ENCODE measurements at regions of chr7 and their contacts with region 1.

Region 1: GRCh38 chr7:149090397-149091195 is at the start of gene ZNF786:
- DNase-seq: peak; percentile 89 to 91 (median 91)
- H3K4me3 ChIP-seq: peak within 1 kb of the TSS; percentile 76 to 99
- H3K4me3 Mint-ChIP-seq: peak within 1 kb of the TSS; percentile 95 to 100 (median 99)
- H3K27ac ChIP-seq: peak within 1 kb of the TSS; percentile 88
- H3K27ac Mint-ChIP-seq: peak within 1 kb of the TSS; percentile 88 to 100 (median 99)
- H3K4me1 ChIP-seq: peaks cover 14% of the 10 kb centered on the region
- H3K4me1 Mint-ChIP-seq: peaks cover 13 to 36% (median 18%) of the 10 kb centered on the region in 4 donors
- H3K27me3 ChIP-seq: no peaks in the 10 kb centered on the region
- H3K27me3 Mint-ChIP-seq: no peaks in the 10 kb centered on the region
- total RNA-seq, gene ZNF786: 18.6 to 18.8 TPM

Region 2: GRCh38 chr7:148940702-148941597 is 149.6 kb before region 1 on chr7:
- CTCF ChIA-PET with region 1: no interaction called
- POLR2A ChIA-PET with region 1: interaction called, 3 read pairs
- intact Hi-C with region 1: loop called (anchors 1 kb)
- DNase-seq: peak; percentile 75 to 84 (median 80)
- H3K4me3 ChIP-seq: peak overlapping the region; percentile 54 to 75
- H3K4me3 Mint-ChIP-seq: peak overlapping the region; percentile 93 to 97 (median 96)
- H3K27ac ChIP-seq: peak overlapping the region; percentile 90
- H3K27ac Mint-ChIP-seq: peak overlapping the region; percentile 91 to 99 (median 98)
- H3K4me1 ChIP-seq: peaks cover 21% of the 10 kb centered on the region
- H3K4me1 Mint-ChIP-seq: peaks cover 6 to 25% (median 13%) of the 10 kb centered on the region in 4 donors
- H3K27me3 ChIP-seq: no peaks in the 10 kb centered on the region
- H3K27me3 Mint-ChIP-seq: no peaks in the 10 kb centered on the region

Region 3: DNA sequence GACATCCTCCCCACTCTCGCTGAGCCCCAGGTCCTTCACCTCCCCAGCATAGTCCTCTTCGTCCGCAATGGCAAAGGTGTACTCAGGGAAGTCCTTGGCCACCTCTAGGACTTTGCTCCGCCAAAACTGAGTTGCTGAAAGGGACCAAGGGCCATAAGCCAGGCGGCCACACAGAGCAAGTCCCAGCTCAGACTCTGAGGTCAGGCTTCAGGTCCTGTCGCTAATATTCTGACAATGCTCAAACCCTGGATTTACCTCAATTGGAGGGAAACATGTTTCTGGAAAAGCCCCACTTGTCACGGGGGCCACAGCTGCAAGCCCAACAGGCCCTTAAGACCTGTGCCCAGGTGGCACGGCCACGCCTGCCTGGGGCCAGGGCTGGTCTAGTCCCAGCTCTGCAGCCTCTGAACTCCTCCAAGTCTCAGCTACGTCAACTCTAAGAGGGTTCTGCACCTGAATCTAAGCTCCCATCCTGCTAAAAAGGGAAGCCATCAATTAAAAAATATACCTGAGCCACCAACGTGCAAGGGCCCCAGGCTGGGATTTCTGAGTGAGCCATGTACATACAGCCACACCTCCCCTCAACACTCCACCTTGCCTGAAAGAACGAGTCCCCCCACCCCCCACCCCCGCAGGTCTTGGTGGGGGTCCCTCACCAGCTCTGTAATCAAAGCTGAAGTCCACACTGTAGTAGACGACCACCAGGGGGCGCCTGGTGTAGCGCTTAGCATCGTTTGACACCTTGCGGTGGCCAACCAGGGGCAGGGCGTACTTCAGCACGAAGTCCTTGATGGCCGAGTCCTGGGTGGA is 85.2 kb before region 1 on chr7:
- CTCF ChIA-PET with region 1: interaction called, 19 read pairs
- POLR2A ChIA-PET with region 1: interaction called, 8 read pairs
- intact Hi-C with region 1: loop called (anchors 1 kb)
- DNase-seq: peak; percentile 71 to 79 (median 73)
- H3K4me3 ChIP-seq: no peak overlapping the region
- H3K4me3 Mint-ChIP-seq: no peak overlapping the region
- H3K27ac ChIP-seq: no peak overlapping the region
- H3K27ac Mint-ChIP-seq: peak overlapping the region in 5 of 7 donors; percentile 46 to 87 (median 62)
- H3K4me1 ChIP-seq: peaks cover 4% of the 10 kb centered on the region
- H3K4me1 Mint-ChIP-seq: peaks cover 3 to 4% (median 4%) of the 10 kb centered on the region in 4 donors
- H3K27me3 ChIP-seq: no peaks in the 10 kb centered on the region
- H3K27me3 Mint-ChIP-seq: no peaks in the 10 kb centered on the region

Region 4: GRCh38 chr7:149071641-149072437 is 18.8 kb before region 1 on chr7:
- CTCF ChIA-PET with region 1: interaction called, 28 read pairs
- POLR2A ChIA-PET with region 1: interaction called, 11 read pairs
- intact Hi-C with region 1: no loop called
- DNase-seq: peak in 4 of 5 donors; percentile 46 to 60 (median 55)
- H3K4me3 ChIP-seq: no peak overlapping the region
- H3K4me3 Mint-ChIP-seq: peak overlapping the region in 4 of 8 donors; percentile 8 to 55 (median 46)
- H3K27ac ChIP-seq: peak overlapping the region; percentile 31
- H3K27ac Mint-ChIP-seq: peak overlapping the region; percentile 36 to 83 (median 72)
- H3K4me1 ChIP-seq: peaks cover 4% of the 10 kb centered on the region
- H3K4me1 Mint-ChIP-seq: peaks cover 4 to 19% (median 6%) of the 10 kb centered on the region in 4 donors
- H3K27me3 ChIP-seq: no peaks in the 10 kb centered on the region
- H3K27me3 Mint-ChIP-seq: no peaks in the 10 kb centered on the region

Region 5: DNA sequence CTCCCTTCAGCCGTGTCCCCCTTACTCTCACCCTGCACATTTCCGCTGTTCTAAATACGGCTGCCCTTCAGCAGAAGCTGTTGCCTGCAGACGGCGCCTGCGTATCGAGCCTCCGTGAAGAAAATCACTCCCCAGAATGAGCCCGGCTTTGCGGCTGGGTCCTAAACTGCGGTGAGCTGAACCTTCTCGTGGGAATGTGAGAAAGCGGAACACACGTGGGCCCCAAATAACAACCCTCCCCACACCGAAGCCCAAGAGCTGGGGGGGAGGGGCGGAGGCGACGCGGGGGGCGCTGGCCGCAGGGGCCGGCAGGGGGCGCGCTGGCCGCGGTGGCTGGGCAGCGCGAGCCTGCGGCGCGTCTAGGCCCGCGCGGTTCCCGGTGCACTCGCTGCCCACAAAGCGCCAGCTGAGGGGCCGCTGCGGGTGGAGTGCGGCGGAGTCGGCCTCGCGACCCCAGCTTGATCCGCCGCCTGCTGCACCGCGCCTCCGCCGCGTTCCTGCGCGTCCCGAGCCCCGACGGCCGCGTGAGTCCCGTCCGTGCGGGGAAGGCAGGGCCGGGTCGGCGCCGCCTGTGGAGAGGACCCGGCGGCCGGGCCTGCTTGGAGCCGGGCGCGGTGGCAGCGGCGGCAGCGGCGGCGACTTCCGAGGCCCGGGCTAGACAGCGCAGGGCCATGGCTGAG is 56.6 kb after region 1 on chr7 and contains the start of gene ZNF398:
- CTCF ChIA-PET with region 1: interaction called, 6 read pairs
- POLR2A ChIA-PET with region 1: interaction called, 13 read pairs
- intact Hi-C with region 1: loop called (anchors 1 kb)
- DNase-seq: peak; percentile 83 to 89 (median 85)
- H3K4me3 ChIP-seq: peak within 1 kb of the TSS; percentile 71 to 74
- H3K4me3 Mint-ChIP-seq: peak within 1 kb of the TSS; percentile 85 to 95 (median 92)
- H3K27ac ChIP-seq: peak within 1 kb of the TSS; percentile 86
- H3K27ac Mint-ChIP-seq: peak within 1 kb of the TSS; percentile 87 to 97 (median 96)
- H3K4me1 ChIP-seq: peaks cover 35% of the 10 kb centered on the region
- H3K4me1 Mint-ChIP-seq: peaks cover 18 to 46% (median 32%) of the 10 kb centered on the region in 4 donors
- H3K27me3 ChIP-seq: no peaks in the 10 kb centered on the region
- H3K27me3 Mint-ChIP-seq: no peaks in the 10 kb centered on the region
- total RNA-seq, gene ZNF398: 26.9 to 28.4 TPM